Upper lobe of right lung (tissue), 1 donor: ENCODE measurements at regions of chr1 and their contacts with region 1.

Region 1: DNA sequence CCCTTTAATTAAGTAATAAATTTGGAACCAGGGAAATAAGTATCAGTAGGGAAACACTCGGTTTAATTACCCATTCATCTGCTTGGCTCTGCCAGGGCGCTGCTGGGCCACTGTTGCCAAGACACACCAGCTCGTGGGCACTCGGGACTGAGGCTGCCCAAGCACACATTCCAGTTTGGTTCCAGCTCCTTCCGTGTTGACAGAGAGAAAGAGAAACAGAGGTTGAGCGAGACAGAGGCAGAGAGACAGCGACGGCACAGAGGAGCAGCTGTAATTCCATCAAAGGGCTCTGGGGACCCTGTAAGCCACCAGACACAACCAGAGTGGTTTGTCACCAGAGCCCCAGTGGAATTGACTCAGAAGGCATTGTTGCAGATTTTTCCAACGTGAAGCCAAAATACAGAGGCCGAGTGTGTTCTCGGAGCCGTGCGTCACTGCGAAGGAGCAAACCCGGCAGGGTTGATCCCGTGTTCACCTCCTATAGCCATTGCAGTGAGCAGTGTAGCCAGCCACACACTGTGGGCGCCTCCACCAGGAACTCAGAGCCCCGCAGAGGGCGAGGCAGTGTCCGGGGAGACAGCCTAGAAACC is 33.5 kb downstream of the SYF2 start:
- DNase-seq: no peak
- ATAC-seq: no peak
- H3K4me3 ChIP-seq: no peak overlapping the region
- H3K27ac ChIP-seq: no peak overlapping the region
- H3K4me1 ChIP-seq: no peaks in the 10 kb centered on the region
- H3K27me3 ChIP-seq: no peaks in the 10 kb centered on the region
- CTCF ChIP-seq: no peak

Region 2: GRCh38 chr1:24849672-24850295 is 349.0 kb before region 1 on chr1:
- intact Hi-C with region 1: loop called (anchors 10 kb)
- DNase-seq: no peak
- ATAC-seq: no peak
- H3K4me3 ChIP-seq: no peak overlapping the region
- H3K27ac ChIP-seq: no peak overlapping the region
- H3K4me1 ChIP-seq: peaks cover 17% of the 10 kb centered on the region
- H3K27me3 ChIP-seq: no peaks in the 10 kb centered on the region
- CTCF ChIP-seq: peak; percentile 32

Region 3: GRCh38 chr1:25247024-25247828 is 48.5 kb after region 1 on chr1 and contains the start of gene RSRP1:
- intact Hi-C with region 1: no loop called
- DNase-seq: peak; percentile 100
- ATAC-seq: peak; percentile 96
- H3K4me3 ChIP-seq: peak within 1 kb of the TSS; percentile 93
- H3K27ac ChIP-seq: peak within 1 kb of the TSS; percentile 99
- H3K4me1 ChIP-seq: peaks cover 28% of the 10 kb centered on the region
- H3K27me3 ChIP-seq: no peaks in the 10 kb centered on the region
- CTCF ChIP-seq: peak; percentile 14
- total RNA-seq, gene RSRP1: 155 TPM

Region 4: GRCh38 chr1:25355841-25356395 is 157.2 kb after region 1 on chr1:
- intact Hi-C with region 1: no loop called
- DNase-seq: no peak
- ATAC-seq: no peak
- H3K4me3 ChIP-seq: no peak overlapping the region
- H3K27ac ChIP-seq: no peak overlapping the region
- H3K4me1 ChIP-seq: no peaks in the 10 kb centered on the region
- H3K27me3 ChIP-seq: no peaks in the 10 kb centered on the region
- CTCF ChIP-seq: no peak